CD8-positive, alpha-beta T cell (primary cell): ENCODE measurements at regions of chr15 and their contacts with region 1.

Region 1: GRCh38 chr15:82809404-82810060 is at the start of gene WHAMM:
- DNase-seq: peak; percentile 89 to 98 (median 94)
- ATAC-seq: peak; percentile 93
- H3K4me3 ChIP-seq: peak within 1 kb of the TSS; percentile 67 to 69
- H3K4me3 Mint-ChIP-seq: peak within 1 kb of the TSS; percentile 92
- H3K27ac ChIP-seq: peak within 1 kb of the TSS; percentile 93 to 97
- H3K27ac Mint-ChIP-seq: peak within 1 kb of the TSS; percentile 97
- H3K4me1 ChIP-seq: peaks cover 26% of the 10 kb centered on the region
- H3K4me1 Mint-ChIP-seq: peaks cover 32% of the 10 kb centered on the region
- H3K27me3 ChIP-seq: no peaks in the 10 kb centered on the region
- H3K27me3 Mint-ChIP-seq: no peaks in the 10 kb centered on the region
- CTCF ChIP-seq: no peak
- total RNA-seq, gene WHAMM: 123 to 124 TPM

Region 2: DNA sequence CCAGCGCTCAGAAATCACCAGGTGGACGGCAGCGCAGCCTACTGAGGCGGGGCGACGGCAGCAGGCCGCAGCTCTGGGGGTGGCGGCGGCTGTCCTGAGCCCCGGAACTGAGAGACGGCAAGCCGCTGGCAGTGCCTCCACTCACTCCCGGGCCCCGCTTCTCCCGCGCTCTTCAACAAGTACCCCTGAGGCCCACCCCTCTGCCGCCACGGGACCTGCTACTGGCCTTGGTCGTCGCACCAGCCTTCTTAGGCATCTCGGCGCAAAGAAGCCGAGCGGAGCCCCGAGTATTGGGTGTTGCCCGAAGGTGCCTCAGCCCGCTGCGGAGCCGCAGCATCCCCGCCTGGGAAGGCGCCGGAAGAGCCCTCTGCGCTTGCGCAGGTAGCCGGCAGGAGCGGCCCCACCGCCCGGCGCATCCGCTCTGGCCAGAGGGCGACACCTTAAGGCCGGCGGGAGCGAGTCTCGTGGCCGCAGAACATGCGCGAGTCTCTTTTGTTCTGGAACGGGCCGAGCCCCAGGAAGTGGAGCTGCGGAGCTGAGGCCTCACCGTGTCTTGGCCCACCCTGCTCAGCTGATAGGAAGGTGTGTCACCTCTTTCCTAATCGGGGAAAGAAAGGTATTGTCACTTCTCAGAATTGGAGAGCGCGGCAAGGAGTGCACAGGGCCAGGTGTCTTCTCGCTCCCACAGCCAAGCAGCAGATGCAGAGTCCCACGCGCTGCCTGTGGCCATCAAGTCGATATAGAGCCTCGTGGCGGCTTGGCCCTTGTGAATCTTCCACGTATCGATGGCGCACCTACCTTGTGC is 201.9 kb after region 1 on chr15 and contains the start of gene C15orf40:
- CTCF ChIA-PET with region 1: no interaction called
- POLR2A ChIA-PET with region 1: interaction called, 7 read pairs
- intact Hi-C with region 1: loop called (anchors 2 to 5 kb)
- DNase-seq: peak; percentile 62 to 94 (median 86)
- ATAC-seq: peak; percentile 80
- H3K4me3 ChIP-seq: peak within 1 kb of the TSS; percentile 86 to 95
- H3K4me3 Mint-ChIP-seq: peak within 1 kb of the TSS; percentile 100
- H3K27ac ChIP-seq: peak within 1 kb of the TSS; percentile 75 to 79
- H3K27ac Mint-ChIP-seq: peak within 1 kb of the TSS; percentile 99
- H3K4me1 ChIP-seq: peaks cover 26% of the 10 kb centered on the region
- H3K4me1 Mint-ChIP-seq: peaks cover 58% of the 10 kb centered on the region
- H3K27me3 ChIP-seq: no peaks in the 10 kb centered on the region
- H3K27me3 Mint-ChIP-seq: no peaks in the 10 kb centered on the region
- CTCF ChIP-seq: no peak
- total RNA-seq, gene C15orf40: 11.8 to 12.3 TPM